ENCODE measurements at regions of chr6 and their contacts with region 1.

Region 1: GRCh38 chr6:111259089-111259831 is 172.0 kb downstream of the SLC16A10 start:
- DNase-seq: peak; percentile 98 to 100 (median 99)
- ATAC-seq: peak; percentile 95
- H3K4me3 ChIP-seq: peak overlapping the region; percentile 60
- H3K4me3 Mint-ChIP-seq: peak overlapping the region; percentile 90
- H3K27ac ChIP-seq: peak overlapping the region; percentile 78 to 89
- H3K27ac Mint-ChIP-seq: peak overlapping the region; percentile 87
- H3K4me1 ChIP-seq: peaks cover 28% of the 10 kb centered on the region
- H3K4me1 Mint-ChIP-seq: peaks cover 35% of the 10 kb centered on the region
- H3K27me3 ChIP-seq: no peaks in the 10 kb centered on the region
- H3K27me3 Mint-ChIP-seq: no peaks in the 10 kb centered on the region
- CTCF ChIP-seq: peak; percentile 96

Region 2: DNA sequence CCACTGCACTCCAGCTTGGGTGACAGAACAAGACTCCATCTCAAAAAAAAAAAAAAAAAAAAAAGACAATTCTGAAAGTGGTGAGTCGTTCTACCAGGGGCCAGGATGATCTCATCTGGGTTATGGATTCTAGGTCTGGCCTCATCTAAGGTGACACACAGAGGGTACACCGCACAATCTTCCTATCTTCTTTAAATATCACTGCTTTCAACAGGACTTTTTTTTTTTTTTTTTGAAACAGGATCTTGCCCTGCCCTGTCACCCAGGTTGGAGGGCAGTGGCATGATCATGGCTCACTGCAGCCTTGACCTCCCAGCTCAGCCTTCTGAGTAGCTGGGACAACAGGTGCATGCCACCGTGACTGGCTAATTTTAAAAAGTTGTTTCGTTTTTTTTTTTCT is 104.3 kb before region 1 on chr6:
- CTCF ChIA-PET with region 1: no interaction called
- POLR2A ChIA-PET with region 1: no interaction called
- intact Hi-C with region 1: no loop called
- DNase-seq: peak in 1 of 14 experiments; percentile 6
- ATAC-seq: no peak
- H3K4me3 ChIP-seq: no peak overlapping the region
- H3K4me3 Mint-ChIP-seq: no peak overlapping the region
- H3K27ac ChIP-seq: no peak overlapping the region
- H3K27ac Mint-ChIP-seq: no peak overlapping the region
- H3K4me1 ChIP-seq: peaks cover 8% of the 10 kb centered on the region
- H3K4me1 Mint-ChIP-seq: peaks cover 42% of the 10 kb centered on the region
- H3K27me3 ChIP-seq: no peaks in the 10 kb centered on the region
- H3K27me3 Mint-ChIP-seq: no peaks in the 10 kb centered on the region
- CTCF ChIP-seq: no peak

Region 3: GRCh38 chr6:111478749-111479148 is 219.5 kb after region 1 on chr6:
- CTCF ChIA-PET with region 1: interaction called, 19 read pairs
- POLR2A ChIA-PET with region 1: interaction called, 59 read pairs
- intact Hi-C with region 1: loop called (anchors 1 kb)
- DNase-seq: peak in 3 of 14 experiments; percentile 65 to 71 (median 70)
- ATAC-seq: peak; percentile 24
- H3K4me3 ChIP-seq: no peak overlapping the region
- H3K4me3 Mint-ChIP-seq: peak overlapping the region; percentile 54
- H3K27ac ChIP-seq: no peak overlapping the region
- H3K27ac Mint-ChIP-seq: peak overlapping the region; percentile 73
- H3K4me1 ChIP-seq: peaks cover 7% of the 10 kb centered on the region
- H3K4me1 Mint-ChIP-seq: peaks cover 52% of the 10 kb centered on the region
- H3K27me3 ChIP-seq: no peaks in the 10 kb centered on the region
- H3K27me3 Mint-ChIP-seq: no peaks in the 10 kb centered on the region
- CTCF ChIP-seq: peak; percentile 57

Region 4: DNA sequence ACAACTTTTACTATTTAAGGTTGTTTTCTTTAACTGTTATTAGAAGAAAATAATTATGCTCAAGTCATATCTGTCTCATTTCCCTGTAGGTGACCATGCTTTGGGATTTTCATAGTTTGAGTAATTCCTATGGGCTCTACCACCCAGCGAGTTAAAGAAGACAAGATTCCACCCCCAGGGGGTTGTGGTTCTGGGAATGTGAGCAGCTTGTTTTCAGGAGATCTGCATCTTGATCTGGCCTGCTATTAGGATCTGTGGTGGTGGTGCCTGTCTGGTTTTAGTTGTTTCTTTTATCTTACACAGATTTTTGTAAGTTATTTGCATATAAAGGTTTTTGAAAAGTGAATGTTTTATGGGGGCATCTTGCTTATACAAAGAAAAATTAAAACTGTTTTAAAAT is 243.9 kb after region 1 on chr6:
- CTCF ChIA-PET with region 1: no interaction called
- POLR2A ChIA-PET with region 1: no interaction called
- intact Hi-C with region 1: no loop called
- DNase-seq: no peak
- ATAC-seq: no peak
- H3K4me3 ChIP-seq: no peak overlapping the region
- H3K4me3 Mint-ChIP-seq: no peak overlapping the region
- H3K27ac ChIP-seq: no peak overlapping the region
- H3K27ac Mint-ChIP-seq: no peak overlapping the region
- H3K4me1 ChIP-seq: no peaks in the 10 kb centered on the region
- H3K4me1 Mint-ChIP-seq: peaks cover 16% of the 10 kb centered on the region
- H3K27me3 ChIP-seq: no peaks in the 10 kb centered on the region
- H3K27me3 Mint-ChIP-seq: no peaks in the 10 kb centered on the region
- CTCF ChIP-seq: no peak

Region 5: GRCh38 chr6:111605100-111605751 is 346.0 kb after region 1 on chr6:
- CTCF ChIA-PET with region 1: interaction called, 5 read pairs
- POLR2A ChIA-PET with region 1: interaction called, 19 read pairs
- intact Hi-C with region 1: loop called in 1 of 2 experiments (anchors 10 kb)
- DNase-seq: peak in 9 of 14 experiments; percentile 8 to 55 (median 13)
- ATAC-seq: peak; percentile 60
- H3K4me3 ChIP-seq: peak overlapping the region; percentile 65
- H3K4me3 Mint-ChIP-seq: peak overlapping the region; percentile 95
- H3K27ac ChIP-seq: peak overlapping the region; percentile 66
- H3K27ac Mint-ChIP-seq: peak overlapping the region; percentile 92
- H3K4me1 ChIP-seq: peaks cover 38% of the 10 kb centered on the region
- H3K4me1 Mint-ChIP-seq: peaks cover 61% of the 10 kb centered on the region
- H3K27me3 ChIP-seq: no peaks in the 10 kb centered on the region
- H3K27me3 Mint-ChIP-seq: no peaks in the 10 kb centered on the region
- CTCF ChIP-seq: no peak

Region 6: DNA sequence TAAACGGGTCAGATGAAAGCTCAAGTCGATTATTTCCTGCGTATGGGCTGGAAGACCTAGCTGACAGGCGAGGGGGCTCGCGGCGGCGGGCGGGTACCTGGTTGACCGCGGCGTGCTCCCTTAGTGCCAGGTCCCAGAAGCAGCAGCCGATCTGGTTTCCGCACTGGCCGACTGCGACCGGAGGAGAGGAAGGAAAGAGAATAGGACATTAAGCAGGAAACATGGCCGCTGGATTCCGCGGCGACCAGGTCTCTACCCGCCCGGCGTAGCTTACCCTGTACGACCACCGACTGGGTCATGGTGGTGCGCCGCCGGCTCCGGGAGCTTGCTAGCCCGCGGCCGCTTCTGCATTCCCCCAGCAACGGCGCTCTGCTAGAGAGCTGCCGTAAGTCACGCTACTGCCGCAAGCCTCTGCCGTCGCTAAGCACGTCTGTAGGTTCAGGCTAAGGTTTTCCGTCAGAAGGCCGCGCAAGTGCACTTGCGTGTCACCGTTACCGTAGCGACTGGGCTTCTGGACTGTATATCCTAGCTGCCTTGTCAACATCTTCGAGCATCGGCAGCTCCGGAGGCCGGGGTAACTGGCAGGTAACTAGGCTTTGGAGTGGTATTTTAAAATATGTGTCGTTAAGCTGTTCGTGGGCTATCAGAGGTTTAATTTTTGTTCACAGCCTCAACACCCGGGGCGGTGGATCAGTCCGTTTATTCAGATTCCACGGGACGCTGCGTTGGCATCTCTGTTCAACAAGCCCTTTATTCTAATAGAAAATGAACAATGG is 828.1 kb after region 1 on chr6 and contains the starts of genes FAM229B and TUBE1:
- CTCF ChIA-PET with region 1: interaction called, 6 read pairs
- POLR2A ChIA-PET with region 1: interaction called, 11 read pairs
- intact Hi-C with region 1: loop called in 1 of 2 experiments (anchors 5 kb)
- DNase-seq: peak; percentile 81 to 98 (median 84)
- ATAC-seq: peak; percentile 97
- H3K4me3 ChIP-seq: peak within 1 kb of the TSS; percentile 88
- H3K4me3 Mint-ChIP-seq: no peak within 1 kb of the TSS
- H3K27ac ChIP-seq: peak within 1 kb of the TSS; percentile 60 to 84
- H3K27ac Mint-ChIP-seq: no peak within 1 kb of the TSS
- H3K4me1 ChIP-seq: peaks cover 3% of the 10 kb centered on the region
- H3K4me1 Mint-ChIP-seq: peaks cover 11% of the 10 kb centered on the region
- H3K27me3 ChIP-seq: peaks cover 0 to 6% of the 10 kb centered on the region in 2 experiments
- H3K27me3 Mint-ChIP-seq: peaks cover 28% of the 10 kb centered on the region
- CTCF ChIP-seq: no peak
- total RNA-seq, gene FAM229B: 3.6 to 4.4 TPM
- total RNA-seq, gene TUBE1: 28.2 to 30.8 TPM

Measured in CD4-positive, alpha-beta T cell (primary cell).